Colonic mucosa (tissue), 4 donors: ENCODE measurements at regions of chr2 and their contacts with region 1.

Region 1: DNA sequence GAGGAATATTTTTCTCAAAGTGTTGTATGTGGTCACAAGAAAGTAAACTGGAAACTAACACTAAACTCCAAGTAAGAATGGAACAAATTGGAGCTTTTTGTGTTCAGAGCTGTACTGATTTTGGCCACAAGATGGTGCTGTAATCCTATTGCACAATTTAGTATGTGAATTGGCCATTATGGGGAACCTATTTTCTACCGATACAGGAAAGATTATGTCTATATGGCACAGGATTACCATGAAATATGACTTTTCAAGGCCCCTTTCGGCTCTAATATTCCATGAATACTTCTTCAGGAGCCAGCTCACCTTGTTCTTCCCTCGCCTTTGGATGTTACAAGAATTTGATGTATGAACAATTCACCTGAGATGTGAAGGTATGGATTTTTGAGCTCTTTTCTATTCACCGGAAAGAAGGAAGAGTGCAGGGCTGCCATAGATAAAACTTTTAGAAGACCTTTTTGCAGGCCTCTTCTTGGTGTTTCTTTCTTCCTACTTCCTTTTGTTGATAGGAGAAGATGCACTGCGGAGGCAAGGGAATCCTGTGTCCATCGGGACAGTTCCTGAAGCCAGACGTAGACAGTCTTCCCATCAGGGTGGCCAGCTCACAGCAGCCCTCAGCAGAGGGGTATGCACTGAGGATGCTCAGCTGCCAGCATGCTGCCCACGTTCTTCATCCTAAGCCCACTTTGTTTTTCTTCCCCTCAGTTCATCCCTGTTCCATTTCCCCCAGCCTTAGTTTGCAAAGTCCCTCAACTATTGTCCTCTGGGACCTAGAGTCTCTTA is 13.3 kb downstream of the MRPL44 start:
- DNase-seq: peak; percentile 64
- H3K4me3 ChIP-seq: no peak overlapping the region
- H3K27ac ChIP-seq: no peak overlapping the region
- H3K4me1 ChIP-seq: no peaks in the 10 kb centered on the region
- H3K27me3 ChIP-seq: no peaks in the 10 kb centered on the region
- CTCF ChIP-seq: peak; percentile 87

Region 2: DNA sequence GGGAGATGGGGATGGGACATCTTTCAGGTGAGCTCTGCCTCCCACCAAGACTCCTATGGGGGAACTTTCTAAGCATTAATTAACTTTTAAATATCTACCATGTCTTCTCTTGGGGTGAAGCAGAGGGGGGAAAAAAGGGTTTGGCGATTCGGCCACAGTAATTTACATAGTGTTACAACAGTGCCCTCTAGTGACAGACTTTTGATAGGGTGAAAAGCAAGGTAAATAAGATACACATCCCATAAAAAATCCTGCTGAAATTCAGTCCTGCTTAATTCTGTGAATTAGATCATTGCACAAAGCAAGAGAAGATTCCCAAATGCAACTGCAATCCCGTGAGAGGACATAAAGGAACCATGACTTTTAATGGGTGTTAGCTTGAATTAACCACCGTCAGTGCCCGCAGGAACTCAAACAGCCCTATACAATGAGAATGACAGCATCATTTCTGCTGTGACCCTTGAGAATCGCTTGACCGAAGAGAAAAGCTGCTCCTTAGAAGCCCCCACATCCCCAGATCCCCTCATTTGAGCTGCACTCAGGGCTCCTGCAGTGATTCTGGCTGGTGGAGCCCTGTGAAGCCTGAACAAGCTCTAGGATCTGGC is 398.6 kb after region 1 on chr2:
- intact Hi-C with region 1: loop called (anchors 10 kb)
- DNase-seq: no peak
- H3K4me3 ChIP-seq: no peak overlapping the region
- H3K27ac ChIP-seq: no peak overlapping the region
- H3K4me1 ChIP-seq: no peaks in the 10 kb centered on the region
- H3K27me3 ChIP-seq: no peaks in the 10 kb centered on the region
- CTCF ChIP-seq: peak; percentile 67

Region 3: DNA sequence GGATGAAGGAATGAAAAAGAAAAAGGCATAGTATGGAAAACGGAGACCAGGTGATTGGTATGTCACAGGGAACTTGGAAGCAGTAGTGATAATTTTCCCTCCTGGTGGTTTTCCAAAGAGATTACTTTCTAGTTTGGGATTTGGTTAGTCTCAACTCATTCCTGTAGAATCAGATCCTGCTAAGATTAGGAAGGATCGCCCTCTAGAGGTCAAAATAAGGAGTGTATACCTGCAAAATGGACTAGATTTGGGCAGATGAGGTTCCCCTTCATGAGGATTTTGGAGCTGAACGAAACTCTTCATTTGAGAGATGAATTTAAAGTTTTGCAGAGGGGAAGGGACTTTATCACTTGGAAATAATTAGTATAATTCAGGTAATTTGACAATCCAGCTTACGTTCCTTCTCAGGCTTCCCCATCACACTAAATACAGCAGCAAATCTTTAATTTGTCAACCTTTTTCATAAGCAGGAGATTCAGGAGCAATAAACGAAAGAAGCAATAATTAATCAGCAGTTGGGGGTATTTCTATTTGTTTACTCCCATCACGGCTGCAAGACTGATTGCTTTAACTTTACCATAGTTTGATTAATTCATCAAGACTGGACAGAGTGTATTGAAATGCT is 680.4 kb after region 1 on chr2:
- intact Hi-C with region 1: loop called (anchors 10 kb)
- DNase-seq: peak; percentile 41
- H3K4me3 ChIP-seq: no peak overlapping the region
- H3K27ac ChIP-seq: no peak overlapping the region
- H3K4me1 ChIP-seq: no peaks in the 10 kb centered on the region
- H3K27me3 ChIP-seq: no peaks in the 10 kb centered on the region
- CTCF ChIP-seq: peak; percentile 72